ENCODE measurements at regions of chr14 and their contacts with region 1.

Region 1: GRCh38 chr14:100400115-100400514 is 77.0 kb downstream of the SLC25A47 start:
- DNase-seq: peak; percentile 91

Region 2: GRCh38 chr14:100348784-100349704 is 51.1 kb before region 1 on chr14:
- in situ Hi-C with region 1: no loop called
- DNase-seq: no peak

Region 3: GRCh38 chr14:100654814-100655740 is 255.0 kb after region 1 on chr14:
- in situ Hi-C with region 1: loop called (anchors 5 kb)
- DNase-seq: peak; percentile 44

Measured in G401 (cell line).